A673 (cell line): ENCODE measurements at regions of chr2 and their contacts with region 1.

Region 1: DNA sequence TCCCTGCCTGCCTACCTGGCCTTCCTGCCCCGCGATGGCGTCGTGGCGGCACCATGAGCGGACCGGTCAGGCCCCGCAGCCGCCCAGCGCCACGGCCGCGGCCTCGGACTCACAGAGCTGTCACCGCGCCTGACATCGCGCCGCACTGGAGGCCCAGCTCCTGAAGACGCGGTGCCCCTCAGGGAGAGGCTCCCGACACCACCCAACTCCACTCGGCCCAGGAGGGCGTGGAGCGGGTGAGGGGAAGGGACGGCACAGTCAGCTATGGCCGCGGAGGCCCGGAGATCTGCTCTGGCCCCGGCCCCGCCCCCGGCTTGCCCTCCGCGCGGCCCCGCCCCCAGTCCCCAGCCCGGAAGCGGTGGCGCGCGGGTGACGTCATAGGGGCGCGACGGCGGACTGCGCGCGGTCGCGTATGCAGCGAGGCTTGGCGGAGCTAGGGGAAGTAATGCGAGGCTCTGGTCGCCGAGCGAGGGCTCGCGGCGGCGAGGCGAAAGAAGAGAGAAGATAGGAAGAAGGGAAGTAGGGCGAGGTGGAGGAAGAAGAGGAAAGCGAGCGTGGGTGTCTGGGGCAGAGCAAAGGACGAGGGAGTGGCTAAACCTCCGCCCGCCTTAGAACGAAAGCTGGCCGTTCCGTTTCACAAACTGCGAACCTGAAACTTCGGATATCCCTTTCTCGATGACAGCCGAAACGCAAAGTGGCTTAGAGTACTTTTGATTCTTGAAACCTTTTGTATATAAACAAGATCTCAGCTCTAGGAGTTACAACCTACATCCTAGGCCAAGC is at the start of gene SLC35F5:
- DNase-seq: peak; percentile 91
- H3K4me3 ChIP-seq: peak within 1 kb of the TSS; percentile 84
- H3K27ac ChIP-seq: peak within 1 kb of the TSS; percentile 89
- H3K4me1 ChIP-seq: no peaks in the 10 kb centered on the region
- H3K27me3 ChIP-seq: no peaks in the 10 kb centered on the region
- CTCF ChIP-seq: no peak
- total RNA-seq, gene SLC35F5: 26.2 and 28.0 TPM in 2 replicates

Region 2: GRCh38 chr2:113768770-113769169 is 12.2 kb after region 1 on chr2:
- CTCF ChIA-PET with region 1: no interaction called
- POLR2A ChIA-PET with region 1: no interaction called
- intact Hi-C with region 1: no loop called
- DNase-seq: no peak
- H3K4me3 ChIP-seq: no peak overlapping the region
- H3K27ac ChIP-seq: no peak overlapping the region
- H3K4me1 ChIP-seq: no peaks in the 10 kb centered on the region
- H3K27me3 ChIP-seq: no peaks in the 10 kb centered on the region
- CTCF ChIP-seq: no peak

Region 3: GRCh38 chr2:113889471-113890252 is 133.1 kb after region 1 on chr2 and contains the start of gene ACTR3:
- CTCF ChIA-PET with region 1: no interaction called
- POLR2A ChIA-PET with region 1: no interaction called
- intact Hi-C with region 1: loop called (anchors 2 kb)
- DNase-seq: peak; percentile 99
- H3K4me3 ChIP-seq: peak within 1 kb of the TSS; percentile 95
- H3K27ac ChIP-seq: peak within 1 kb of the TSS; percentile 98
- H3K4me1 ChIP-seq: peaks cover 31% of the 10 kb centered on the region
- H3K27me3 ChIP-seq: no peaks in the 10 kb centered on the region
- CTCF ChIP-seq: peak; percentile 22; the same call in 1 of the 2 replicates
- total RNA-seq, gene ACTR3: 282 and 340 TPM in 2 replicates

Region 4: GRCh38 chr2:113965644-113966043 is 209.1 kb after region 1 on chr2:
- CTCF ChIA-PET with region 1: no interaction called
- POLR2A ChIA-PET with region 1: no interaction called
- intact Hi-C with region 1: loop called (anchors 10 kb)
- DNase-seq: peak; percentile 50
- H3K4me3 ChIP-seq: no peak overlapping the region
- H3K27ac ChIP-seq: no peak overlapping the region
- H3K4me1 ChIP-seq: no peaks in the 10 kb centered on the region
- H3K27me3 ChIP-seq: no peaks in the 10 kb centered on the region
- CTCF ChIP-seq: peak; percentile 65